CD4-positive, alpha-beta memory T cell (primary cell): ENCODE measurements at regions of chr3 and their contacts with region 1.

Region 1: DNA sequence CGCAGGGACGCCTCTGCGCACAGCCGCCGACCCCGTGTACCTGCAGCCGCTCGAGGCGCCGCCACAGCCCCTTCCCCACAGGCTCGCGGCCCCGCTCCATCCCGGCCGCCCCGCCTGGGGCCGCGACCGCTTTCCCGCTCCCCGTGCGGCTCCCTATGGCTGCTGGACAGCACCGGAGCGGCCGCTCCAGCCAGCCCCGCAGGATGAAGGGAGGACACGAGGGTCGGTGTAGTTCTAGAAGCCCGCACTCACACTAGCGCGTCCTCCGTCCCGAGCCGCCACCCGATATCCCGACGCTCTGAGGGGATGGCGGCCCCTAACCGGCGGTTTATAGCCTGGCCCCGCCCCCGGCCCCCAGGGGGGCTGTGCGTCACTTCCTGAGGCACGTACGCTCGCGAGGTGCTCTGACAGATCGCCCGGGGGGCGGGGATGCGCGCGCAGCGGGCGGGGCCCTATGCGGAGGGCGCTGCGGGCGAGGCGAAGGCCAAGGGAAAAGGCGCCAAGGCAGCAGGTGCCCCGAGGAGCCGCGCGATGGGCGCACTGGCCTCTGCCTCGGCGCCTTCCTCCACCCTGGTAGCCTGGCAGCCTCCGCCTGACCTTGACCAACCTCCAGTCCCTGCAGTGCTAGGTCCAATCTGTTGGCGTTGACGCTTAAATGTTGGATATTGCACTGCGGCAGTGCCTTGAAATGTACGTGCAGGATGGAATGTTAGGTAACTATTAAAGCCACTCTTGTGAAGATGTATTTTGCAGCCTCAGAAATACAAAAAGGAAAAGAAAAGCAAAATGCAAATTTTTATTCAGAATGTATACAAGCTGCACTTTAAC is at the start of gene TFRC:
- DNase-seq: peak; percentile 93 to 95 (median 94)
- H3K4me3 ChIP-seq: peak within 1 kb of the TSS; percentile 68 to 90
- H3K4me3 Mint-ChIP-seq: peak within 1 kb of the TSS; percentile 90 to 99 (median 94)
- H3K27ac ChIP-seq: peak within 1 kb of the TSS; percentile 97
- H3K27ac Mint-ChIP-seq: peak within 1 kb of the TSS; percentile 85 to 99 (median 96)
- H3K4me1 ChIP-seq: peaks cover 45% of the 10 kb centered on the region
- H3K4me1 Mint-ChIP-seq: peaks cover 24 to 48% (median 38%) of the 10 kb centered on the region in 4 donors
- H3K27me3 ChIP-seq: no peaks in the 10 kb centered on the region
- H3K27me3 Mint-ChIP-seq: no peaks in the 10 kb centered on the region
- total RNA-seq, gene TFRC: 63.2 to 73.1 TPM

Region 2: DNA sequence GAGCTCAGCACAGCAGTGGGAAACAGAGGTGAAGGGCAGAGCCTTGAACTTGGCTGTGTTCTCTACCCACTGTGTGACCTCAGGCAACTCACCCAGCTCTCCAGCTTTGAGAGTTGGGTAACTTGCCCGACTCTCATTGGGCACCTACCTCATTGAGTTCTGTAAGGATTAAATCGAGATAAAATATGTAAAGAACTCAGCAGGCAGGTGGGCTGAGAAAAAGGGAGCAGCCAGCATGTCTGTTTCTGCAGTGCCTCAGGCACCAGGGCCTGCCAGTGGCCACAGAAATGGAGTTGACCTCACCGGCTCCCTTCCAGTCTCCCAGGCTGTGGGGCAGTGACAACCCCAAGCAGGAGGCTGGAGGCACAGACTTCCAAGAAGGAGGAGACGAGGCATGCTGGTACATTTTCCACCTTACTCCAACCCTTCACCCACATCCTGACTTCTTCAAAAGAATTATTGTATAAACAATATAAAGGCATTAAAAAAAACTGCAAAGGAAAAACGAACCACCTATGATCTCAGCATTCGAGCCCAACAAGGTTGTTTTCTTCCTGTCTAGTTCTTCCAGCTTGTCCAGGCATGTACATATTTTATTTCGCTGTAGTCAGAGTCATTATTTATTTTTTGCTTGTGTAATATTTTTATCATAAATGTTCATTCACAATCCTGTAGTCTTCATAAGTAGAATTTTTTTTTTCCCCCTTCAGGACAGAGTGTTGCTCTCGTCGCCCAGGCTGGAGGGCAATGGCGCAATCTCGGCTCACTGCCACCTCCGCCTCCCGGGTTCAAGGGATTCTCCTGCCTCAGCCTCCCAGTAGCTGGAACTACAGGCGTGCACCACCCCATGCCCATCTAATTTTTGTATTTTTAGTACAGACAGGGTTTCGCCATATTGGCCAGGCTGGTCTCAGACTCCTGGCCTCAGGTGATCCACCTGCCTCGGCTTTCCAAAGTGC is 54.3 kb after region 1 on chr3:
- CTCF ChIA-PET with region 1: no interaction called
- POLR2A ChIA-PET with region 1: no interaction called
- intact Hi-C with region 1: loop called (anchors 10 kb)
- DNase-seq: no peak
- H3K4me3 ChIP-seq: no peak overlapping the region
- H3K4me3 Mint-ChIP-seq: no peak overlapping the region
- H3K27ac ChIP-seq: no peak overlapping the region
- H3K27ac Mint-ChIP-seq: peak overlapping the region in 1 of 7 donors; percentile 57
- H3K4me1 ChIP-seq: no peaks in the 10 kb centered on the region
- H3K4me1 Mint-ChIP-seq: peaks cover 0 to 4% (median 0%) of the 10 kb centered on the region in 4 donors
- H3K27me3 ChIP-seq: no peaks in the 10 kb centered on the region
- H3K27me3 Mint-ChIP-seq: no peaks in the 10 kb centered on the region

Region 3: GRCh38 chr3:196179380-196180308 is 97.6 kb after region 1 on chr3:
- CTCF ChIA-PET with region 1: interaction called, 8 read pairs
- POLR2A ChIA-PET with region 1: interaction called, 124 read pairs
- intact Hi-C with region 1: loop called (anchors 1 kb)
- DNase-seq: peak; percentile 83 to 94 (median 85)
- H3K4me3 ChIP-seq: peak overlapping the region in 1 of 2 donors; percentile 34
- H3K4me3 Mint-ChIP-seq: peak overlapping the region; percentile 46 to 85 (median 78)
- H3K27ac ChIP-seq: peak overlapping the region; percentile 61
- H3K27ac Mint-ChIP-seq: peak overlapping the region; percentile 91 to 99 (median 98)
- H3K4me1 ChIP-seq: peaks cover 66% of the 10 kb centered on the region
- H3K4me1 Mint-ChIP-seq: peaks cover 34 to 64% (median 47%) of the 10 kb centered on the region in 4 donors
- H3K27me3 ChIP-seq: no peaks in the 10 kb centered on the region
- H3K27me3 Mint-ChIP-seq: no peaks in the 10 kb centered on the region

Region 4: GRCh38 chr3:196186651-196187573 is 104.9 kb after region 1 on chr3:
- CTCF ChIA-PET with region 1: interaction called, 569 read pairs
- POLR2A ChIA-PET with region 1: interaction called, 124 read pairs
- intact Hi-C with region 1: no loop called
- DNase-seq: peak in 1 of 5 donors; percentile 59
- H3K4me3 ChIP-seq: no peak overlapping the region
- H3K4me3 Mint-ChIP-seq: peak overlapping the region; percentile 28 to 89 (median 72)
- H3K27ac ChIP-seq: peak overlapping the region; percentile 63
- H3K27ac Mint-ChIP-seq: peak overlapping the region; percentile 62 to 96 (median 92)
- H3K4me1 ChIP-seq: peaks cover 44% of the 10 kb centered on the region
- H3K4me1 Mint-ChIP-seq: peaks cover 18 to 46% (median 30%) of the 10 kb centered on the region in 4 donors
- H3K27me3 ChIP-seq: no peaks in the 10 kb centered on the region
- H3K27me3 Mint-ChIP-seq: no peaks in the 10 kb centered on the region

Region 5: DNA sequence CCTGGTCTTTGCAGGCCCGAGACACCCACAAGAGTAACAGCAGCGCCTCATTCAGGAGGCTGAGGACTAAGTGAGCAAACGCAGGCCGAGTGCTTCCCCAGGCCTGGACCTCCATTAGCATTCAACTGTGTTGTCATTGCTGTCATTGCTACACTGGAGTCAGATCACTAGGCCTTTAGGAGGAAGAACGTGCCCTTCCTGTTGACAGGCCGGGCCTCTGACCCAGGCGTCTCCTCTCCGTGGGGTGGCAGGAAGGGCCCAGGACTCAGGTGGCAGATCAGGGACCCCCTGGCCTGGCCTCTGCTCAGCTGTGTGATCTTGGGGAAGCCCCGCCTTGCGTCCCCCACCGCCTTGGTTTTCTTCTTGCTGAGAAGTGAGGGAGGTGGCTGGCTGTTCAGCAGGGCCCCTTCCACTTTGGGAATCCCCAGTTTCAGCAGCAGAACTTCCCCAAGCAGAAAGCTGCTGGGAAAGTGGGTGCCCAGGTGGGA is 110.1 kb after region 1 on chr3:
- CTCF ChIA-PET with region 1: interaction called, 569 read pairs
- POLR2A ChIA-PET with region 1: interaction called, 37 read pairs
- intact Hi-C with region 1: no loop called
- DNase-seq: peak; percentile 47 to 83 (median 59)
- H3K4me3 ChIP-seq: peak overlapping the region in 1 of 2 donors; percentile 34
- H3K4me3 Mint-ChIP-seq: peak overlapping the region in 7 of 8 donors; percentile 33 to 85 (median 66)
- H3K27ac ChIP-seq: peak overlapping the region; percentile 75
- H3K27ac Mint-ChIP-seq: peak overlapping the region; percentile 95 to 99 (median 97)
- H3K4me1 ChIP-seq: peaks cover 47% of the 10 kb centered on the region
- H3K4me1 Mint-ChIP-seq: peaks cover 14 to 54% (median 22%) of the 10 kb centered on the region in 4 donors
- H3K27me3 ChIP-seq: no peaks in the 10 kb centered on the region
- H3K27me3 Mint-ChIP-seq: no peaks in the 10 kb centered on the region

Region 6: DNA sequence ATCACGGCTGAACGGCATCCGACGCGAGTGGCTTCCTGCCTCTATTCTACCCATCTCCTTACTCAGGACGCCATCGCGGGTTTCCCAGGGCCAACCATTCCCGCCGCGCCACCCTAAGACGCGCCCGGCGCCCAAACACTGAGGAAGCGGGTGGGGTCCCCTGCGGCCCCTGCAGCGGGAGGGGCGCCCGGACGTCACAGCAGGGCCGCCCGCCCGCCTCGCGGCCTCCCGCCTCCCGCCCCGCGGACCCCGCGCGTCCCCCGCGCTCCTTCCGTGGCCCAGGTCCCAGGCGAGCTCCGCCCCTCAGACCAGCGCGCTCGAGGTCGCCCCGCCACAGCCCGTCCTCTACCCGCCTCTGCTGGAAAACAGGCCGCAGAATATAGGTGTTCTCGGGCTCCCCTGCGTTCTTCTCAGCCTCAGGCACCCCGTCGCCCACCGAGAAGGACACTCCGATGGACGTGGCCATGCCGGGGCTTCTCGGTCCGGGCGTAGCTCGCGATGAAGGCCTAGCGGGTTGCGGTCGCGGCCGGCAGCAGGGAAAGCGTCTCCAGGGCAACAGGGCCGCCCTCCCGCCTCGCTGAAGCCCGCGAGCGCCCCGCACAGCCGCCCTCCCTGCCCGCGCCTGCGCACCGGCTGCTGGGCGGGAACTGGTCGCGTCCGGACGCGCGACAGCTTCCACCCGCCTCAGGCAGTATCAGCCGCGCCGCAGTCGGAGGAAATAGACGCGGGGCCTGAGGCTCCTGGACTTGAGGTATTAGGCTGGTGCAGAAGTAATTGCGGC is 235.9 kb after region 1 on chr3 and contains the start of gene DYNLT2B:
- CTCF ChIA-PET with region 1: no interaction called
- POLR2A ChIA-PET with region 1: interaction called, 4 read pairs
- intact Hi-C with region 1: loop called (anchors 5 kb)
- DNase-seq: peak; percentile 88 to 91 (median 90)
- H3K4me3 ChIP-seq: peak within 1 kb of the TSS; percentile 52 to 88
- H3K4me3 Mint-ChIP-seq: peak within 1 kb of the TSS; percentile 93 to 97 (median 94)
- H3K27ac ChIP-seq: peak within 1 kb of the TSS; percentile 86
- H3K27ac Mint-ChIP-seq: peak within 1 kb of the TSS; percentile 93 to 98 (median 98)
- H3K4me1 ChIP-seq: peaks cover 11% of the 10 kb centered on the region
- H3K4me1 Mint-ChIP-seq: peaks cover 1 to 16% (median 8%) of the 10 kb centered on the region in 4 donors
- H3K27me3 ChIP-seq: no peaks in the 10 kb centered on the region
- H3K27me3 Mint-ChIP-seq: no peaks in the 10 kb centered on the region
- total RNA-seq, gene DYNLT2B: 6.0 to 7.4 TPM

Region 7: DNA sequence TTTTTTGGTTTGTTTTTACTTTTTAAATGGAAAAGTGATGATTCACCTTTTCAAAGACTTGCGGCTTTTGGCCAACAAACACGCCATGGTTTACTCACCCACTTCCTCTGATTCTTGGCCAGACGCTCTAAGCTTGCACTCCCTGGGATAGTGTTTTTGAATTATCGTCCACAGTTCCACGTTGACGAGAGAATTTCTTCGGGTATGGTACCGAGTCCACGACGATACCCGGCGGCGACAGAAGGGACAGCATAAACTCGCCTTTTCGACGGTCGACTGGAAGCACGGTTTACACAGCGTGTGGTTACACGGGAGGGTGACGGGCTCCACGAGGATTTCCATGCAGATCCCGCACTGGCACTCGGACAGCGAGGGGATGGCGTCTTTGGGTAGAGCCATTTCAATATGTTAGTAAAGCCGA is 420.8 kb after region 1 on chr3:
- CTCF ChIA-PET with region 1: no interaction called
- POLR2A ChIA-PET with region 1: interaction called, 5 read pairs
- intact Hi-C with region 1: loop called (anchors 5 kb)
- DNase-seq: peak; percentile 70 to 87 (median 73)
- H3K4me3 ChIP-seq: peak overlapping the region; percentile 70 to 79
- H3K4me3 Mint-ChIP-seq: peak overlapping the region; percentile 97 to 100 (median 98)
- H3K27ac ChIP-seq: peak overlapping the region; percentile 81
- H3K27ac Mint-ChIP-seq: peak overlapping the region; percentile 94 to 99 (median 97)
- H3K4me1 ChIP-seq: peaks cover 27% of the 10 kb centered on the region
- H3K4me1 Mint-ChIP-seq: peaks cover 25 to 56% (median 38%) of the 10 kb centered on the region in 4 donors
- H3K27me3 ChIP-seq: no peaks in the 10 kb centered on the region
- H3K27me3 Mint-ChIP-seq: no peaks in the 10 kb centered on the region